ENCODE measurements at regions of chr9 and their contacts with region 1.

Region 1: DNA sequence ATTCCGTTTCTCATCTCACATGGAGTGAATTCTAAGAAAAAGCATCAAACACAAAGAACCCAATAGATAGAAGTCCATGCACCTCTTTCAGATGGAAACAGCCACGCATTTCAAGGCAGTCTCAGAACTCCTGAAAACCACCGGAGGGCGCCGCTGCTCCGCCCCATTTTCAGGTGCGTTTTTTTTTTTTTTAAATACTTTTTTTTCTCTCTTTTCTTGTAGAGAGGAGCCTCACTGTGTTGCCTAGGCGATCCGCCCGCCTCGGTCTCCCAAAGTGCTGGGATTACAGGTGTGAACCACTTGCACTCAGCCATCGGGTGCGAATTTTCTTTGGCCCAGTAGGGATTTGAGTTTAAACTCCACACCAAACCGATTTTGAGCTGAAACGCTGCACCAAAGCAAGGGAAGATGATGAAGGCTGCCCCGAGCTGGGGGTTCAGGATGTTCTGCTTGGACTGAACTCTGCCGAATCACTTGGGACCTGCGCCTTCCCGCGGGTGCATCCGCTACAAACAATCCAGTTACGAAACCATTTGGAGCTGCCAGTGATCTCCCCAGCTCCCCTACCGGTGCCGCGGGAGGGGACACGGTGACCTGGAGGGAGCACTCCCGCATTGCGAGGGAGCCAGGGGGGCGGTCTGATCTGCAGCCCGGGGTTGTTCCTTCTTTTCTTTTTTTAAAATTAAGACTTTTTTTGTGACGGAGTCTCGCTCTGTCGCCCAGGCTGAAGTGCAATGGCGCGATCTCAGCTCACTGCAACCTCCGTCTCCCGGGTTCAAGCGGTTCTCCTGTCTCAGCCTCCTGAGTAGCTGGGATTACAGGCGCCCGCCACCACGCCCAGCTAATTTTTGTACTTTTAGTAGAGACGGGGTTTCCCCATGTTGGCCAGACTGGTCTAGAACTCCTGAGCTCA is 1.4 kb downstream of the PTGR1 start:
- DNase-seq: no peak
- H3K4me3 ChIP-seq: peak overlapping the region; percentile 77 to 93 (median 83)
- H3K27ac ChIP-seq: peak overlapping the region; percentile 87 to 93 (median 90)
- H3K4me1 ChIP-seq: peaks cover 8 to 19% (median 10%) of the 10 kb centered on the region in 4 donors
- H3K27me3 ChIP-seq: no peaks in the 10 kb centered on the region
- CTCF ChIP-seq: peak; percentile 52 to 72 (median 70)
- EP300 ChIP-seq: no peak
- POLR2A ChIP-seq: no peak

Region 2: DNA sequence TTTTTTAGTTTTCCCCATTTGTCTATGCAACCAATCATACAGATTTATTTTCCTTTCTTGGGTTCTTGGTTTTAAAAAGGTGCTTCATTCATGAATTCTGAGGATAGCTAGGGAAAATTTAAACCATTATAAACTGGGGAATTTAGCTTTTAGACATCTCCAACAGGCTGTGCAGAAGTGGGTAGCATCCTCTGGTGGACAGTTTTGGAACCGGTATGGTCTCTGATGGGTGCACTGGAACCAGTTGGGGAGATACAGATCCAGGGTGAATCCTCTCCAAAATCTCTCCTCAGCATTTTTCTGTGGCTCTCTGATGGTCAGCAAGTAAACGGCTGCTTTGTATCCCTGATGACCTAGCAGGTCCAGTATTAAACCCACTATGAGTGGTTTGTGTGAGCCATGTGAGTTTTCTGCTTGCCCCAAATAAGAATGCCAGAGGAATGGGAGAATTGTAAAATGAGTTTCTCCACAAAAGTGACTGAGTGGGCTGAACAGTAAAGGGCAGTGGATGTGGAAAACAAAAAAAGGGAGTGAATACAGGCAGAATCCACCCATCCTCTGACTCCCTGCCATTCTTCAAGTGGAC is 23.9 kb after region 1 on chr9:
- intact Hi-C with region 1: loop called (anchors 2 kb)
- DNase-seq: no peak
- H3K4me3 ChIP-seq: no peak overlapping the region
- H3K27ac ChIP-seq: no peak overlapping the region
- H3K4me1 ChIP-seq: peaks cover 0 to 2% (median 0%) of the 10 kb centered on the region in 4 donors
- H3K27me3 ChIP-seq: peaks cover 0 to 5% (median 0%) of the 10 kb centered on the region in 4 donors
- CTCF ChIP-seq: peak; percentile 72 to 87 (median 86)
- EP300 ChIP-seq: no peak
- POLR2A ChIP-seq: no peak

Region 3: GRCh38 chr9:111631071-111631971 is 33.2 kb after region 1 on chr9 and contains the start of gene DNAJC25:
- intact Hi-C with region 1: loop called (anchors 2 kb)
- DNase-seq: peak; percentile 98
- H3K4me3 ChIP-seq: peak within 1 kb of the TSS; percentile 84 to 98 (median 90)
- H3K27ac ChIP-seq: peak within 1 kb of the TSS; percentile 89 to 97 (median 92)
- H3K4me1 ChIP-seq: peaks cover 13 to 48% (median 35%) of the 10 kb centered on the region in 4 donors
- H3K27me3 ChIP-seq: no peaks in the 10 kb centered on the region
- CTCF ChIP-seq: peak in 1 of 3 experiments; percentile 26
- EP300 ChIP-seq: no peak
- POLR2A ChIP-seq: peak; percentile 99
- total RNA-seq, gene DNAJC25: 8.8 to 12.0 (median 9.5) TPM

Region 4: DNA sequence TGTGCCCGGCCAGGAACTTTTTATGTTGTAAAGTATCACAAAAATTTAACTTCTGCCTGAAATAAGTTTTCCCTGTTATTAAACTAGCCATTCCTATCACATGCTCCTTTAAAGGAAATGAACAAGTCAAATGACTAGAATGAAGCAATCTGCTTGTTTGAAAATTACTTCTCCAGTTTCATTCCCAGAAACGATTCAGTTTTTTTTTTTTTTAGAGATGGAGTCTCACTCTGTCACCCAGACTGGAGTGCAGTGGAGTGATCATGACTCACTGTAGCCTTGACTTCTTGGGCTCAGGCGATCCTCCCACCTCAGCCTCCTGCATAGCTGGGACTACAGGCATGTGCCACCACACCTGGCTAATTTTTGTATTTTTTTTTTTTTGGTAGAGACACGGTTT is 50.0 kb after region 1 on chr9:
- intact Hi-C with region 1: no loop called
- DNase-seq: no peak
- H3K4me3 ChIP-seq: no peak overlapping the region
- H3K27ac ChIP-seq: no peak overlapping the region
- H3K4me1 ChIP-seq: peaks cover 0 to 3% (median 0%) of the 10 kb centered on the region in 4 donors
- H3K27me3 ChIP-seq: no peaks in the 10 kb centered on the region
- CTCF ChIP-seq: no peak
- EP300 ChIP-seq: no peak
- POLR2A ChIP-seq: no peak

Region 5: DNA sequence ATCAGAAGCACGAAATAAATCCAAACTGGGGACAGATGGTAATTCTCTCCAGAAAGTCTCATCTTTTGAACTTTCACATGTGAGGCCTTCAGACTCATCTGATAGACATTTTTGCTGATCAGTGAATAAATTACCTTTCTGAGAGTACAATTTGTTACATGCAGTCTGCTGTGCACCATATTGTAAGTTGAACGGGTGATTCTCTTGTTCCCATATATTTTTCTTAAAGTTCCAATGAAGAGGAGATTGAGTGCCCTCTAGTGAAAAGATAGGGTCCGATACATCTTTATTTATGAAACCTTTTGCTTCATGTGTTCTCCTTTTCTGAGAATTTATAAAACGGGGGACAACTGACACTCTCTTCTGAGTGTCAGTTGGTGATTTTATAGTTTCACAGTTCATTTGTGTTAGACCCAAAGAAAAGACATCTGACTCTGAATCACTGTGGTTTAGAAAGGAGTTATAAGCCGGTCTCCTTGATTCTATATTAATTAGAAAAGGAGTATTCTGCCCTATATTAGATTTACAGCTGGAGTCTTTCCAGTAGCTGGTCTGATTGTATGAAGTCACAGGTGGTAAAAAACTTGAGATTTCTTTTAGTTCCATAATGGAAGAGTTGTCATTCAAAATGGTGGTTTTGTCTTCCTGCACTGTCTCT is 93.7 kb after region 1 on chr9:
- intact Hi-C with region 1: loop called (anchors 2 kb)
- DNase-seq: no peak
- H3K4me3 ChIP-seq: no peak overlapping the region
- H3K27ac ChIP-seq: no peak overlapping the region
- H3K4me1 ChIP-seq: no peaks in the 10 kb centered on the region
- H3K27me3 ChIP-seq: no peaks in the 10 kb centered on the region
- CTCF ChIP-seq: peak in 1 of 3 experiments; percentile 30
- EP300 ChIP-seq: no peak
- POLR2A ChIP-seq: no peak

Region 6: GRCh38 chr9:111839388-111839787 is 241.3 kb after region 1 on chr9:
- intact Hi-C with region 1: no loop called
- DNase-seq: no peak
- H3K4me3 ChIP-seq: no peak overlapping the region
- H3K27ac ChIP-seq: no peak overlapping the region
- H3K4me1 ChIP-seq: peaks cover 0 to 23% (median 13%) of the 10 kb centered on the region in 4 donors
- H3K27me3 ChIP-seq: no peaks in the 10 kb centered on the region
- CTCF ChIP-seq: no peak
- EP300 ChIP-seq: no peak
- POLR2A ChIP-seq: no peak